HAP-1 (cell line): ENCODE measurements at regions of chr6 and their contacts with region 1.

Region 1: GRCh38 chr6:29942275-29943052 is at the start of gene HLA-A:
- DNase-seq: peak; percentile 84 to 90
- H3K4me3 ChIP-seq: peak within 1 kb of the TSS; percentile 36
- H3K4me1 ChIP-seq: no peaks in the 10 kb centered on the region
- H3K27me3 ChIP-seq: no peaks in the 10 kb centered on the region

Region 2: GRCh38 chr6:29853243-29853642 is 89.2 kb before region 1 on chr6:
- in situ Hi-C with region 1: no loop called
- DNase-seq: no peak
- H3K4me3 ChIP-seq: no peak overlapping the region
- H3K4me1 ChIP-seq: no peaks in the 10 kb centered on the region
- H3K27me3 ChIP-seq: peaks cover 5% of the 10 kb centered on the region

Region 3: GRCh38 chr6:29887819-29888776 is 54.4 kb before region 1 on chr6:
- in situ Hi-C with region 1: loop called (anchors 5 kb)
- DNase-seq: peak in 1 of 2 experiments; percentile 50
- H3K4me3 ChIP-seq: peak overlapping the region; percentile 23
- H3K4me1 ChIP-seq: no peaks in the 10 kb centered on the region
- H3K27me3 ChIP-seq: no peaks in the 10 kb centered on the region